Common myeloid progenitor, CD34-positive (primary cell): ENCODE measurements at regions of chr18 and their contacts with region 1.

Region 1: GRCh38 chr18:61502472-61502871 is 169.2 kb downstream of the CDH20 start:
- DNase-seq: peak; percentile 25 to 66 (median 51)
- H3K4me3 ChIP-seq: no peak overlapping the region
- H3K27ac ChIP-seq: no peak overlapping the region
- H3K4me1 ChIP-seq: no peaks in the 10 kb centered on the region
- H3K27me3 ChIP-seq: peaks cover 3 to 25% (median 10%) of the 10 kb centered on the region in 5 experiments

Region 2: GRCh38 chr18:60684843-60685513 is 817.5 kb before region 1 on chr18:
- CTCF ChIA-PET with region 1: interaction called, 11 read pairs
- POLR2A ChIA-PET with region 1: no interaction called
- DNase-seq: peak; percentile 4 to 31 (median 30)
- H3K4me3 ChIP-seq: no peak overlapping the region
- H3K27ac ChIP-seq: no peak overlapping the region
- H3K4me1 ChIP-seq: no peaks in the 10 kb centered on the region
- H3K27me3 ChIP-seq: no peaks in the 10 kb centered on the region

Region 3: DNA sequence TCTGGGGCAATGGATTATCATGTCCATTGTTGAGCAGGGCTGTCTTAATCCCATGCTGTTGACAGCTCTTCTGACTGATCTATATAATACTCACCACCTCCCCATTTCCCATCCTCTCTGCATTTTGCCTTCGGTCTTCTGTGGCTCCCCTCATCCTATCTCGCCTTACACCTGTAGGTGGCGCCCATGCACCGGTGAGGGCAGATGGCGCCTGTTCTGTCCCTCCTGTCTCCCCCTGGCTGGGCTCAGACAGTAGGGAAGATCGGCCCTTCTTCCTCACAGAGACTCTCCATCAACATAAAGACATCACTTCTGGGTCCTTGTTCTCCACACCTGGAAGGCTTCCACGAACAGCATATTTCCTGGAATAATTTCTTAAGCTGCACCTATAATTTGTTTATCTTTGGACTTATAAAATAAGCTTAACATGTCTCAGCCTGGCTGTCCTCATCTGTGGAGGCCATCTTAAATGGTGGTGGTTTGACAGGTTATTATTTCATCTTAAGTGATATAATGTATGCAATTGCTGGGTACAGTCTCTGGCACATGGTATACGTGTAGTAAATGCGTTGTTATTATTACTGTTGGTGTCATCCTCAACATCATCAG is 180.1 kb before region 1 on chr18:
- CTCF ChIA-PET with region 1: interaction called, 56 read pairs
- POLR2A ChIA-PET with region 1: interaction called, 4 read pairs
- DNase-seq: peak; percentile 22 to 58 (median 45)
- H3K4me3 ChIP-seq: no peak overlapping the region
- H3K27ac ChIP-seq: no peak overlapping the region
- H3K4me1 ChIP-seq: no peaks in the 10 kb centered on the region
- H3K27me3 ChIP-seq: peaks cover 0 to 5% (median 4%) of the 10 kb centered on the region in 5 experiments